Activated CD4-positive, alpha-beta T cell treated with anti-CD3 and anti-CD28 coated beads, Interleukin-2, amount 10 ng/mL, durations not matched to agents 24 days and 14 days (primary cell): ENCODE measurements at regions of chr6 and their contacts with region 1.

Region 1: GRCh38 chr6:28673800-28674671 is 148.4 kb downstream of the GPX5 start:
- DNase-seq: peak; percentile 74
- H3K4me3 Mint-ChIP-seq: peak overlapping the region; percentile 78
- H3K27ac Mint-ChIP-seq: peak overlapping the region; percentile 76
- H3K4me1 Mint-ChIP-seq: peaks cover 13% of the 10 kb centered on the region
- H3K27me3 Mint-ChIP-seq: peaks cover 46% of the 10 kb centered on the region

Region 2: DNA sequence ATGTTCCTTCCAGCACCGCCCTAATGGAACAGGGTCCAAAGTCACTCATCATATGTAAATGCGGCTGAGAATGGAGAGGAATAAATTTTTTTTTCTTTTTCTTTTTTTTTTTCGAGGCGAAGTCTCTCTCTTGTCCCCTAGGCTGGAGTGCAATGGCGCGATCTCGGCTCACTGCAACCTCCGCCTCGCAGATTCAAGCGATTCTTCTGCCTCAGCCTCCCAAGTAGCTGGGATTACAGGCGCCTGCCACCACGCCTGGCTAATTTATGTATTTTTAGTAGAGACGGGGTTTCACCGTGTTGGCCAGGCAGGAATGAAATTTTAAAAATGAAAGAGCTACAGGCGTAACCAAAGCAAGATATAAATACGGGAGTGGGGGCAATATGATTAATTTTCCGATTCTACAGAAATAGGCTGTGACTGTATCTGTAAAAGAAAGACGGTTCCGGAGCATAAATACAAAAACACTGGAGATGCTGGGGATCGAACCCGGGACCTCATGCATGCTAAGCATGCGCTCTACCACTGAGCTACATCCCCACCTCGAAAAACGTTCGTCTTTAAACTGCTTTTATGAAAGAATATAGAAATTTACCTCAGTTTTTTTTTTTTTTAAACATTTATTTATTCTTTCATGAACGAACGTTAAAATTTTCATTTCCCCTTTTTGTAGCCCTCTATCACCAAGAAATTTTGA is 16.1 kb before region 1 on chr6:
- intact Hi-C with region 1: loop called (anchors 1 kb)
- DNase-seq: peak; percentile 81
- H3K4me3 Mint-ChIP-seq: peak overlapping the region; percentile 80
- H3K27ac Mint-ChIP-seq: peak overlapping the region; percentile 85
- H3K4me1 Mint-ChIP-seq: peaks cover 19% of the 10 kb centered on the region
- H3K27me3 Mint-ChIP-seq: peaks cover 62% of the 10 kb centered on the region